ENCODE measurements at regions of chr22 and their contacts with region 1.

Region 1: GRCh38 chr22:29154364-29155048 is 51.2 kb upstream of the EMID1 start:
- DNase-seq: peak; percentile 57 to 97 (median 83)
- ATAC-seq: peak; percentile 92 to 98 (median 94)
- H3K4me3 ChIP-seq: peak overlapping the region in 2 of 4 donors; percentile 2 to 12
- H3K27ac ChIP-seq: no peak overlapping the region
- H3K4me1 ChIP-seq: peaks cover 0 to 5% (median 5%) of the 10 kb centered on the region in 3 donors
- H3K27me3 ChIP-seq: no peaks in the 10 kb centered on the region
- CTCF ChIP-seq: peak; percentile 87 to 98 (median 96)

Region 2: DNA sequence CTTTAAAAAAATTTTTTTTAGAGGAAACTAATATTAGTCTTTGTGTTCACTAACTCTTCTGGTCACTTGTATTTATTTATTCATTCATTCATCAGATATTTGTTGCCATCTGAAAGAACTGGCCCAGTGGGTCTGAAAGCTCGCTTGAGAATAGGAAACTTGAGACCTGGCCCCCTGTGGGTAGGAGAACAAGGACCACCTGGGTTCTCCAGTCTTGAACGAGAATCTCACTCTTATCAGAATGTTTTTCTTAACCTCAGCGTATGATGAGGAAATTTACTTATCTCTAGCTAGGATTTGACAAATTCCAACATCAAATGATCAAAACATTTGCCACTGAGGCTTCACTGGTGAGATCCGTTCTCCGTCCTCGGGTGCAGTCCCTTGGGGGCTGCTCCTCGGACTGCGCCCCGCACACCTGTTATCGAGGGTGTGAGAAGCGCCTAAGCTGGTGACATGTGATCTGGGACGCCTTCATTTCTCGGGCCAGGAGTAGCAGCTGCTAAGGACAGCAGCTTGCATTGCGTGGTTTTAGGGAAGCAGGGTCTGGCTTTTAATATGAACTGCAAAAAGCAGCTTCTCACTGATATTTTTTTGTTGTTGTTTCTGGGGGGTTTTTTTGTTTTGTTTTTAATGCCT is 99.2 kb before region 1 on chr22:
- intact Hi-C with region 1: loop called in 1 of 3 experiments (anchors 10 kb)
- DNase-seq: no peak
- ATAC-seq: no peak
- H3K4me3 ChIP-seq: no peak overlapping the region
- H3K27ac ChIP-seq: no peak overlapping the region
- H3K4me1 ChIP-seq: no peaks in the 10 kb centered on the region
- H3K27me3 ChIP-seq: no peaks in the 10 kb centered on the region
- CTCF ChIP-seq: no peak

Region 3: GRCh38 chr22:29245637-29246385 is 91.3 kb after region 1 on chr22:
- intact Hi-C with region 1: loop called in 1 of 3 experiments (anchors 10 kb)
- DNase-seq: peak; percentile 52 to 86 (median 74)
- ATAC-seq: peak; percentile 87 to 100 (median 96)
- H3K4me3 ChIP-seq: no peak overlapping the region
- H3K27ac ChIP-seq: no peak overlapping the region
- H3K4me1 ChIP-seq: no peaks in the 10 kb centered on the region
- H3K27me3 ChIP-seq: no peaks in the 10 kb centered on the region
- CTCF ChIP-seq: peak; percentile 89 to 96 (median 94)